PC-9 (cell line): ENCODE measurements at regions of chr3 and their contacts with region 1.

Region 1: GRCh38 chr3:51498876-51499738 is 708 bp downstream of the DCAF1 start:
- DNase-seq: peak; percentile 83 to 95
- H3K4me3 ChIP-seq: peak overlapping the region; percentile 61
- H3K27ac ChIP-seq: peak overlapping the region; percentile 78
- H3K4me1 ChIP-seq: no peaks in the 10 kb centered on the region; the same call in 1 of the 2 replicates
- H3K27me3 ChIP-seq: no peaks in the 10 kb centered on the region
- CTCF ChIP-seq: no peak

Region 2: DNA sequence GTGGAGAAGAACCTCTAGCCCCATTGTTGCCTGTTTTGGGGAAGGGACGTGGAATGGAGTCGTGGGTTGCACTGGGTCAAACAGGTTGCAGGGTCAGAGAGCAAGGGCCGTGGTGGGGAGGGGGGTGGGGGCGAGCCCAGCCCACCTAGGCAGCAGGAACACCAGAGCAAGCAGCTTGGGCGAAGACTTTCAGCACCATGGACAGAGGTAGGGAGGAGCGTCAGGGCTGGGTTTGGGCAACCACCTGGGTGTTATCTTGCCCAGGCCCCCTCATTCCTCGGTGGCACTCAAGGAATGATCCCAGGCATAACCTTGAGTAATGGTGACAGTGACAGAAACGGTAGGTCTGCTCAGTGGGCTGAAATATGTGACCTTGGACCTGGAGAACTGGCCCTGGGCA is 1093.9 kb before region 1 on chr3:
- CTCF ChIA-PET with region 1: interaction called, 14 read pairs
- POLR2A ChIA-PET with region 1: no interaction called
- intact Hi-C with region 1: no loop called
- DNase-seq: no peak
- H3K4me3 ChIP-seq: no peak overlapping the region
- H3K27ac ChIP-seq: no peak overlapping the region
- H3K4me1 ChIP-seq: peaks cover 13% of the 10 kb centered on the region
- H3K27me3 ChIP-seq: peaks cover 13% of the 10 kb centered on the region
- CTCF ChIP-seq: no peak

Region 3: DNA sequence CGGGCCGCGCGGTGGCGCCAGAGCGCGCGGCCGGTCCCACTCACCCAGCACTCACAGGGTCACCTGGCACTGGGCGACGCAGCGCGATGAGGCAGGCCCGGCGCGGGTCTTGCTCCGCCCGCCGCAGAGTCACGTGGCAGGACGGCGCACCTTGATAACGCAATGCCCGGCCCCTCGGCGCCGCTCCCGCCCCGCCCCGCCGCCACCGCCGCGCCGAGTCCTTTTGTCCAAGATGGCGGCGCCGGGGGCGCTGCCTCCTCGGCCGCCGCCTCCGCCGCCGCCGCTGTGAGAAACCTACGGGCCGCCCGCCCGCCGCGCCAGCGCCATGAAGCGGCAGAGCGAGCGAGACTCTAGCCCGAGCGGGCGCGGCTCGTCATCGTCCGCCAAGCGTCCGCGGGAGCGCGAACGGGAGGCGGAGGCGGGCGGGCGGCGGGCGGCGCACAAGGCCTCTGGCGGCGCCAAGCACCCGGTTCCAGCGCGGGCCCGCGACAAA is 108.0 kb before region 1 on chr3 and contains the start of gene RBM15B:
- CTCF ChIA-PET with region 1: interaction called, 6 read pairs
- POLR2A ChIA-PET with region 1: interaction called, 9 read pairs
- intact Hi-C with region 1: loop called (anchors 1 kb)
- DNase-seq: peak; percentile 79 to 97
- H3K4me3 ChIP-seq: peak within 1 kb of the TSS; percentile 68
- H3K27ac ChIP-seq: peak within 1 kb of the TSS; percentile 41
- H3K4me1 ChIP-seq: peaks cover 50% of the 10 kb centered on the region
- H3K27me3 ChIP-seq: no peaks in the 10 kb centered on the region
- CTCF ChIP-seq: no peak; the same call in 1 of the 2 replicates
- total RNA-seq, gene RBM15B: 29.1 and 29.4 TPM in 2 replicates

Region 4: DNA sequence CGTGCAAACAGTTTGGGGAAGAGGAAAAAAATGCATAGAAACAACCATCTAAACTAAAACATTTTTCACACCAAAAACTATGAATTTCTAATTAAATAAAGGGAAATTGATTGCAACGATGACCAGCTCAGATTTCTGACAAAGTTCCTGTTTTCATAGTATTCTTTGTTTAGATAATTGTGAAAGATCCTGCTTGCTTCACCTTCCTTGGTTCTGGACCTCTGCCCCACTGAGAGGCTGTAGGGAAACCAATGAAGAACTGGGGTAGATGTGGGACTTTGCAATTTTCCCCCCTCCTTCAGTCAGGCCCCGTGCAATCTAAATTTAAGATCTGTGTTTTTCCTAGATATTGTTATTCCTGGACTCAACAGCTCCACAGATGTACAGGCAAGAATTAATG is 158.1 kb after region 1 on chr3:
- CTCF ChIA-PET with region 1: no interaction called
- POLR2A ChIA-PET with region 1: interaction called, 15 read pairs
- intact Hi-C with region 1: no loop called
- DNase-seq: no peak
- H3K4me3 ChIP-seq: no peak overlapping the region
- H3K27ac ChIP-seq: no peak overlapping the region
- H3K4me1 ChIP-seq: no peaks in the 10 kb centered on the region
- H3K27me3 ChIP-seq: no peaks in the 10 kb centered on the region
- CTCF ChIP-seq: no peak

Region 5: DNA sequence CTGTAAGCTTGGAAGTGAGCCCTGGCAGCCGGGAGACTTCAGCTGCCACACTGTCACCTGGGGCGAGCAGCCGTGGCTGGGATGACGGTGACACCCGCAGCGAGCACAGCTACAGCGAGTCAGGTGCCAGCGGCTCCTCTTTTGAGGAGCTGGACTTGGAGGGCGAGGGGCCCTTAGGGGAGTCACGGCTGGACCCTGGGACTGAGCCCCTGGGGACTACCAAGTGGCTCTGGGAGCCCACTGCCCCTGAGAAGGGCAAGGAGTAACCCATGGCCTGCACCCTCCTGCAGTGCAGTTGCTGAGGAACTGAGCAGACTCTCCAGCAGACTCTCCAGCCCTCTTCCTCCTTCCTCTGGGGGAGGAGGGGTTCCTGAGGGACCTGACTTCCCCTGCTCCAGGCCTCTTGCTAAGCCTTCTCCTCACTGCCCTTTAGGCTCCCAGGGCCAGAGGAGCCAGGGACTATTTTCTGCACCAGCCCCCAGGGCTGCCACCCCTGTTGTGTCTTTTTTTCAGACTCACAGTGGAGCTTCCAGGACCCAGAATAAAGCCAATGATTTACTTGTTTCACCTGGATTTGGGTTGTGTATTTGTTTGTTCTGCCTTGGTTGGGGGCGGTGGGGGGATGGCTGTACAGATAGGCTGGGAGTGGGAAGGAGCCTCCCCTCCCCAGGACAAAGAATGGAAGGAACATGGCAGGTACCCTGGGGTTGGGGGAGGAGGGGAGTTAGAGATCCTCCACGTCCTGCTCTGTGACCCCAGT is 204.8 kb after region 1 on chr3:
- CTCF ChIA-PET with region 1: no interaction called
- POLR2A ChIA-PET with region 1: interaction called, 26 read pairs
- intact Hi-C with region 1: no loop called
- DNase-seq: no peak
- H3K4me3 ChIP-seq: no peak overlapping the region
- H3K27ac ChIP-seq: no peak overlapping the region
- H3K4me1 ChIP-seq: no peaks in the 10 kb centered on the region
- H3K27me3 ChIP-seq: no peaks in the 10 kb centered on the region
- CTCF ChIP-seq: no peak

Region 6: DNA sequence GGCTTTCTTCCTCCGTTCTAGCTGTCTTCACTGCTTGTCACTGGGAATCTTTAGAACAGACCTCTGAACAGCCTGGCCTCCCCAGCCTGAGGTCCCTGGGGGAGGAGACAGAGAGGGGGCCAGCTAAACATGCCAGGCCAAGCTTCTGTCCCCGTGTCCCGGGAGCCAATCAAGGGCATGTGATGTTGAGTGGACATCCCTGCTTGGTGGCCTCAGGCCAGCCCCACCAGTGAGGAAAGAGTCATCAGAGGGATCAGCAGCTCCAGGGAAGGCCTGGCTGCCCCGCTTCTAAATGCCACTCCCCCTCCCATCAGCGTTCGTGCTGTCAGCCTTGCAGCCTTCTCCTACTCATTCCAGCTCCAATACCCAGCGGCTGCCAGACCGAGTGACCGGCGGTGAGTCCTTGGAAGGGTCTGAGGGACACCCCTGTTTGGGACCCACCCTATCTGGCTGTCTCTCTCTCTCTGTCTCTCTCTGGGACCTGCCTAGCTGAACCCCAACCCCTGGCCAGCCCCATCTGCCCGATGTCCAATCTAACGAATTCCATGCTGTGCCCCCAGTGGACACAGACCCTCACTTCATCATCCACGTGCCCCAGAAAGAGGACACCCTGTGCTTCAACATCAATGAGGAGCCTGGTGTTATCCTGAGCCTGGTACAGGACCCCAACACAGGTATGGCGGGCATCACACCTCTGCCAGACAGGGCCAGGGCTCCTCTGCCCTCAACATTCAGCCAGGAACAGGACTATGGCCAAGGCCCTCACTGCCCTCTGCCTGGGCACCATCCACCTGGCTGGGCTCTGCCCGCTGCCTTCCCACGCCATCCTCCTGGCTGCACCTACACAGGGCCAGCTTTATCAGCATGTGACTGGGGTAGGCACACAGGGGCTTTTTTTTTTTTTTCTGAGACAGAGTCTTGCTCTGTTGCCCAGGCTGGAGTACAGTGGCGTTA is 1288.8 kb after region 1 on chr3:
- CTCF ChIA-PET with region 1: no interaction called
- POLR2A ChIA-PET with region 1: interaction called, 20 read pairs
- intact Hi-C with region 1: no loop called
- DNase-seq: no peak
- H3K4me3 ChIP-seq: no peak overlapping the region
- H3K27ac ChIP-seq: no peak overlapping the region
- H3K4me1 ChIP-seq: no peaks in the 10 kb centered on the region
- H3K27me3 ChIP-seq: peaks cover 37% of the 10 kb centered on the region
- CTCF ChIP-seq: no peak